ENCODE measurements at regions of chr3 and their contacts with region 1.

Region 1: DNA sequence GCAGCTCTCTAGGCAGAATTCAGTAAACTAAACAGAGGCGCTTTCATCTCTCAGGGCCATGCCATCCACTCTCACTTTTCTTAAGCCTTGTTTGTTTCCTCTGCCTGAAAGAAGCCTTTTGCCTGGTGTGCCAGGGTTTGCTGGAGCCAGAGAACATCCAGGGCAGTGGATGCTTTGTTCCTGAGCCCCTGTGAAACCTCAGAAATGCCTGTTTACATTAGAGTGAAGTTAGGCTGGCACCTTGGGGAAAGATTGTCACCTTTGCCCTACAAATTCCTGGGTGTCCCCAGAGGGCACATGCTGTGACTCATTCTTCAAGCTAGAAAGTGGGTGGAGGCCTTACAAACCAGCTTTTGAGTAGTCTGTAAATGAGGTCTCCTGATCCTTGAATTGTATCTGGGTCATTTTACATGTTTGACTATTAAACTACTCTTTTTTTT is 10.7 kb upstream of the TRAK1 start:
- DNase-seq: peak; percentile 83
- ATAC-seq: peak; percentile 74
- H3K4me3 ChIP-seq: no peak overlapping the region
- H3K27ac ChIP-seq: peak overlapping the region; percentile 30
- H3K4me1 ChIP-seq: peaks cover 37% of the 10 kb centered on the region
- H3K27me3 ChIP-seq: no peaks in the 10 kb centered on the region
- CTCF ChIP-seq: no peak
- EP300 ChIP-seq: no peak
- POLR2A ChIP-seq: no peak
- RAD21 ChIP-seq: no peak

Region 2: GRCh38 chr3:42043027-42043796 is 37.3 kb before region 1 on chr3:
- CTCF ChIA-PET with region 1: no interaction called
- POLR2A ChIA-PET with region 1: no interaction called
- in situ Hi-C with region 1: no loop called
- intact Hi-C with region 1: loop called (anchors 5 kb)
- DNase-seq: peak; percentile 87
- ATAC-seq: peak; percentile 50
- H3K4me3 ChIP-seq: peak overlapping the region in 2 of 3 experiments; percentile 39 to 41; a peak in 4 of 6 replicates
- H3K27ac ChIP-seq: peak overlapping the region; percentile 30
- H3K4me1 ChIP-seq: peaks cover 65% of the 10 kb centered on the region
- H3K27me3 ChIP-seq: no peaks in the 10 kb centered on the region
- CTCF ChIP-seq: no peak
- EP300 ChIP-seq: peak in 1 of 2 experiments; percentile 50; a peak in 1 of 4 replicates
- POLR2A ChIP-seq: no peak
- RAD21 ChIP-seq: no peak

Region 3: DNA sequence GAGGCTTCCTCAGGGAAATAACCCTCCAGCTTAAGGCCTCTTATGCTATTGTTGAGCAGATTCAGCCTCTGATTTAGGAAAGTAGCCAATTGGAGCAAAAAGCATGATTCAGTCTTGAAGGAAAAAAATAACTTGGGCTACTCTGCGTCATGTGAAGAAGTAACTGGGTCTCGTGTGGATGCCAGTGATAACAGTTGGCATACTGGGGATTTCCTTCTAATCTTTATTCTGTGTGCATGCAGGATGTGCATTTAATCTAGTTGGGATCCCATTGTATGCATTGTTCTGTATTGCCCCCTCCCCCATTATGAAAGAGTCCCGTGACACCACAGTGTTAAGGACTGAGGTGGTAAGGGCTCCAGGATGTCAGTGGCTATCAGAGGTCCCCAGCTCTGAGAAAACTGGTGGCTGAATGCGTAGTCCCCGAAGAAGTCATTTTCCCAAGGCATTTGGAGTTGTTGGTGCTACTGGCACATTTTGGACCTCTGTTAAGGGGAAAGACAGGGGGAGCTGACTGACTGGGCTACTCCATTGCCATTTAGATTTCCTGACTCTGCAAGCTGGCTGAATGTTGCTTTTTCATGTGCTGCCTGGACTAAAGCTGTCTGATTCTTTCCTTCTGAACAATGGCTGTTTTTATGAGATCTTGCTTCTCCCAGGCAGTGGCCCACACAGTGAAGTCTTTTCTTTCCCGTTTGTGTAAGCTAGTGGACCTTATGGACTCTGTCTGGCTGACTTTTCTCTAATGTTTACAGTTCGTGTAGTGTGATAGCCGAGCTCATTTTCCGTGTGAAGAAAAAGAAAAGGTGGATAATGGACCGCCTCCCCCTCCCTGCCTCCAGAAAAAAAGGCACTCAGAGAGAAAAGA is 27.8 kb before region 1 on chr3:
- CTCF ChIA-PET with region 1: no interaction called
- POLR2A ChIA-PET with region 1: interaction called, 4 read pairs
- in situ Hi-C with region 1: no loop called
- intact Hi-C with region 1: loop called (anchors 2 kb)
- DNase-seq: peak; percentile 98
- ATAC-seq: peak; percentile 94
- H3K4me3 ChIP-seq: peak overlapping the region; percentile 14 to 58 (median 40)
- H3K27ac ChIP-seq: peak overlapping the region; percentile 97
- H3K4me1 ChIP-seq: peaks cover 83% of the 10 kb centered on the region
- H3K27me3 ChIP-seq: no peaks in the 10 kb centered on the region; a peak in 1 of 5 replicates
- CTCF ChIP-seq: no peak
- EP300 ChIP-seq: peak in 1 of 2 experiments; percentile 88; a peak in 2 of 4 replicates
- POLR2A ChIP-seq: peak in 1 of 2 experiments; percentile 59; a peak in 3 of 4 replicates
- RAD21 ChIP-seq: no peak

Region 4: DNA sequence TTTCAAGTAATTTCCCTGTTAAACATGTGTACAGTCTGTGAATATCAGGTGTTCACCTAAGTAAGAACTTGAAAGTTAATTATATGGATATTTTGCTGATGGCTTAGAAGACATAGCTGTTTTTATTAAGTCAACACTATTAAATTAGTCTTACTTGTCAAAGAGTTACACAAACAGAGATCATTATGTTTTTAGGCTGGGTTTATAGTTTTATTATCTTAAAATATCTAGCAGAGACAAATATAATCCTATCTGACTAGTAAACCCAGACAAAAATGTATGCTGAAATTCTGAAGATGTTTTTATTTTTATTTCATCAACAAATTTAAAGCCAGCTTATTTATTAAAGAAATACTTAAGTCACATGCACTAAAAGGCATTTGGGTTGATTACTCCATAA is 236.7 kb after region 1 on chr3:
- CTCF ChIA-PET with region 1: no interaction called
- POLR2A ChIA-PET with region 1: no interaction called
- in situ Hi-C with region 1: no loop called
- intact Hi-C with region 1: no loop called
- DNase-seq: no peak
- ATAC-seq: no peak
- H3K4me3 ChIP-seq: no peak overlapping the region
- H3K27ac ChIP-seq: no peak overlapping the region
- H3K4me1 ChIP-seq: no peaks in the 10 kb centered on the region
- H3K27me3 ChIP-seq: peaks cover 0 to 6% of the 10 kb centered on the region in 2 experiments; a peak in 2 of 5 replicates
- CTCF ChIP-seq: no peak
- EP300 ChIP-seq: no peak
- POLR2A ChIP-seq: no peak
- RAD21 ChIP-seq: no peak